GM13977 (cell line): ENCODE measurements at regions of chr18 and their contacts with region 1.

Region 1: GRCh38 chr18:12750076-12750714 is 47.4 kb downstream of the PSMG2 start:
- DNase-seq: peak; percentile 26
- CTCF ChIP-seq: no peak

Region 2: DNA sequence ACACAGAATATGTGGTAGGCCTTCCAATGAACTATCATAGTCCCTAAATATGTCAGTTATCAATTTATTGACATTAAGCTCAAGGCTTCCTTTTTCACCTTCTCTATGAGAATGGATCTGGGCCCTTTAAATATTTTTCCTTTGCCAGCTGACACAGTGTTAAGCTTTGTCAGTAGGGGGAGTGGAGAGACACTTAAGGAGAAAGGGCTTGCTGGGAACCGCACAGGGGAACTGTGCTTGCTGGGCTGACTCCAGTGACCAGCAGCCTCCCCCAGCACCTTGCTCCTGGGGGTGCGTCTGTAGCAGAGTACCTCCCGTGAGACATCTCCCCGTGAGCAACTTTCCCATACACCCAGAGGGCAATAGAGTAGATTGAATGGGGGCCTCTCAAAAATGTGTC is 140.3 kb after region 1 on chr18:
- in situ Hi-C with region 1: loop called (anchors 10 kb)
- DNase-seq: no peak
- CTCF ChIP-seq: peak; percentile 13